ENCODE measurements at regions of chr7 and their contacts with region 1.

Region 1: GRCh38 chr7:107150375-107151073 is 18.3 kb upstream of the HBP1 start:
- DNase-seq: peak in 40 of 42 donors; percentile 13 to 91 (median 74)

Region 2: GRCh38 chr7:106793015-106793975 is 357.2 kb before region 1 on chr7:
- intact Hi-C with region 1: loop called (anchors 10 kb)
- DNase-seq: peak in 14 of 42 donors; percentile 10 to 60 (median 34)

Region 3: GRCh38 chr7:106947244-106947728 is 203.2 kb before region 1 on chr7:
- intact Hi-C with region 1: loop called (anchors 10 kb)
- DNase-seq: peak in 32 of 42 donors; percentile 12 to 77 (median 46)

Region 4: GRCh38 chr7:107044347-107045194 is 106.0 kb before region 1 on chr7 and contains the start of gene PRKAR2B:
- intact Hi-C with region 1: loop called (anchors 10 kb)
- DNase-seq: peak; percentile 51 to 95 (median 88)